Naive thymus-derived CD4-positive, alpha-beta T cell (primary cell): ENCODE measurements at regions of chr14 and their contacts with region 1.

Region 1: GRCh38 chr14:65164068-65164824 is 61.9 kb upstream of the MAX start:
- DNase-seq: peak in 7 of 9 donors; percentile 29 to 67 (median 58)
- ATAC-seq: peak; percentile 76
- H3K4me3 ChIP-seq: no peak overlapping the region
- H3K4me3 Mint-ChIP-seq: no peak overlapping the region
- H3K27ac ChIP-seq: no peak overlapping the region
- H3K27ac Mint-ChIP-seq: peak overlapping the region in 1 of 9 donors; percentile 67
- H3K4me1 ChIP-seq: no peaks in the 10 kb centered on the region
- H3K4me1 Mint-ChIP-seq: peaks cover 0 to 43% (median 0%) of the 10 kb centered on the region in 7 donors
- H3K27me3 ChIP-seq: no peaks in the 10 kb centered on the region
- H3K27me3 Mint-ChIP-seq: no peaks in the 10 kb centered on the region

Region 2: GRCh38 chr14:65137648-65138307 is 26.5 kb before region 1 on chr14:
- CTCF ChIA-PET with region 1: no interaction called
- POLR2A ChIA-PET with region 1: no interaction called
- intact Hi-C with region 1: no loop called
- DNase-seq: no peak
- ATAC-seq: no peak
- H3K4me3 ChIP-seq: no peak overlapping the region
- H3K4me3 Mint-ChIP-seq: no peak overlapping the region
- H3K27ac ChIP-seq: no peak overlapping the region
- H3K27ac Mint-ChIP-seq: no peak overlapping the region
- H3K4me1 ChIP-seq: no peaks in the 10 kb centered on the region
- H3K4me1 Mint-ChIP-seq: peaks cover 4 to 21% (median 6%) of the 10 kb centered on the region in 7 donors
- H3K27me3 ChIP-seq: no peaks in the 10 kb centered on the region
- H3K27me3 Mint-ChIP-seq: peaks cover 0 to 4% (median 0%) of the 10 kb centered on the region in 5 donors

Region 3: GRCh38 chr14:65281991-65282895 is 118.0 kb after region 1 on chr14:
- CTCF ChIA-PET with region 1: no interaction called
- POLR2A ChIA-PET with region 1: no interaction called
- intact Hi-C with region 1: loop called in 1 of 2 experiments (anchors 10 kb)
- DNase-seq: peak in 3 of 9 donors; percentile 23 to 28 (median 27)
- ATAC-seq: peak; percentile 52
- H3K4me3 ChIP-seq: peak overlapping the region; percentile 33
- H3K4me3 Mint-ChIP-seq: peak overlapping the region; percentile 62 to 86 (median 82)
- H3K27ac ChIP-seq: peak overlapping the region; percentile 58
- H3K27ac Mint-ChIP-seq: peak overlapping the region; percentile 81 to 97 (median 87)
- H3K4me1 ChIP-seq: peaks cover 23% of the 10 kb centered on the region in 2 donors
- H3K4me1 Mint-ChIP-seq: peaks cover 30 to 52% (median 38%) of the 10 kb centered on the region in 7 donors
- H3K27me3 ChIP-seq: no peaks in the 10 kb centered on the region
- H3K27me3 Mint-ChIP-seq: no peaks in the 10 kb centered on the region

Region 4: GRCh38 chr14:65506809-65507208 is 342.6 kb after region 1 on chr14:
- CTCF ChIA-PET with region 1: no interaction called
- POLR2A ChIA-PET with region 1: no interaction called
- intact Hi-C with region 1: no loop called
- DNase-seq: no peak
- ATAC-seq: no peak
- H3K4me3 ChIP-seq: no peak overlapping the region
- H3K4me3 Mint-ChIP-seq: no peak overlapping the region
- H3K27ac ChIP-seq: no peak overlapping the region
- H3K27ac Mint-ChIP-seq: no peak overlapping the region
- H3K4me1 ChIP-seq: no peaks in the 10 kb centered on the region
- H3K4me1 Mint-ChIP-seq: peaks cover 13 to 66% (median 51%) of the 10 kb centered on the region in 7 donors
- H3K27me3 ChIP-seq: no peaks in the 10 kb centered on the region
- H3K27me3 Mint-ChIP-seq: no peaks in the 10 kb centered on the region

Region 5: GRCh38 chr14:65824285-65824977 is 660.2 kb after region 1 on chr14:
- CTCF ChIA-PET with region 1: interaction called, 13 read pairs
- POLR2A ChIA-PET with region 1: no interaction called
- intact Hi-C with region 1: loop called (anchors 1 to 2 kb)
- DNase-seq: peak in 8 of 9 donors; percentile 38 to 71 (median 60)
- ATAC-seq: peak; percentile 93
- H3K4me3 ChIP-seq: no peak overlapping the region
- H3K4me3 Mint-ChIP-seq: peak overlapping the region in 1 of 10 donors; percentile 39
- H3K27ac ChIP-seq: no peak overlapping the region
- H3K27ac Mint-ChIP-seq: peak overlapping the region in 3 of 9 donors; percentile 0 to 66 (median 66)
- H3K4me1 ChIP-seq: peaks cover 6 to 8% of the 10 kb centered on the region in 2 donors
- H3K4me1 Mint-ChIP-seq: peaks cover 3 to 33% (median 14%) of the 10 kb centered on the region in 7 donors
- H3K27me3 ChIP-seq: no peaks in the 10 kb centered on the region
- H3K27me3 Mint-ChIP-seq: peaks cover 0 to 7% (median 0%) of the 10 kb centered on the region in 5 donors

Region 6: DNA sequence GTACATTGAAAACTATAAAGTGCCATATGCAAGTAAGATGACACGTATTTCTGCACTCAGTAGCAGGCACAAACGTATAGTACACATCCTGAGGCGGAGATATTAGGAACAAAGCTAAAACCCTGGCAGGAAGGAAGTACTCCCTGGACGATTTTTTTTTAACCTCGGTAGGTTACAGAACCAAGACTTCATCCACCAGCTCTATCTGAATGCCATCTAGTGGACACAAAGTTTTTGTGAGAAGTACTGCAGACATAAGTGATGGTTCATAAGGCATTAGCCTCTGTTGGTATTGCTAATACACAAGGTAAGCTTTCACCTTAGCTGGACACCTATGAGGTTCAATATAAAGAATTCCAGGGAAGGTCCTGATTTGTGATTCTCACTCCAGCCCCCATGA is 1238.9 kb after region 1 on chr14:
- CTCF ChIA-PET with region 1: interaction called, 3 read pairs
- POLR2A ChIA-PET with region 1: no interaction called
- intact Hi-C with region 1: loop called (anchors 1 kb)
- DNase-seq: peak in 5 of 9 donors; percentile 4 to 27 (median 18)
- ATAC-seq: peak; percentile 27
- H3K4me3 ChIP-seq: no peak overlapping the region
- H3K4me3 Mint-ChIP-seq: peak overlapping the region in 1 of 10 donors; percentile 28
- H3K27ac ChIP-seq: no peak overlapping the region
- H3K27ac Mint-ChIP-seq: peak overlapping the region in 1 of 9 donors; percentile 23
- H3K4me1 ChIP-seq: no peaks in the 10 kb centered on the region
- H3K4me1 Mint-ChIP-seq: peaks cover 0 to 6% (median 0%) of the 10 kb centered on the region in 7 donors
- H3K27me3 ChIP-seq: no peaks in the 10 kb centered on the region
- H3K27me3 Mint-ChIP-seq: peaks cover 0 to 5% (median 0%) of the 10 kb centered on the region in 5 donors